Activated B cell treated with CpG ODN at 0.5 μM for 24 hours (primary cell): ENCODE measurements at regions of chr2 and their contacts with region 1.

Region 1: GRCh38 chr2:223923976-223924375 is 21.2 kb downstream of the WDFY1 start:
- DNase-seq: no peak
- ATAC-seq: no peak
- H3K4me3 Mint-ChIP-seq: no peak overlapping the region
- H3K27ac Mint-ChIP-seq: no peak overlapping the region
- H3K4me1 Mint-ChIP-seq: peaks cover 41% of the 10 kb centered on the region
- H3K27me3 Mint-ChIP-seq: no peaks in the 10 kb centered on the region
- CTCF ChIP-seq: no peak

Region 2: DNA sequence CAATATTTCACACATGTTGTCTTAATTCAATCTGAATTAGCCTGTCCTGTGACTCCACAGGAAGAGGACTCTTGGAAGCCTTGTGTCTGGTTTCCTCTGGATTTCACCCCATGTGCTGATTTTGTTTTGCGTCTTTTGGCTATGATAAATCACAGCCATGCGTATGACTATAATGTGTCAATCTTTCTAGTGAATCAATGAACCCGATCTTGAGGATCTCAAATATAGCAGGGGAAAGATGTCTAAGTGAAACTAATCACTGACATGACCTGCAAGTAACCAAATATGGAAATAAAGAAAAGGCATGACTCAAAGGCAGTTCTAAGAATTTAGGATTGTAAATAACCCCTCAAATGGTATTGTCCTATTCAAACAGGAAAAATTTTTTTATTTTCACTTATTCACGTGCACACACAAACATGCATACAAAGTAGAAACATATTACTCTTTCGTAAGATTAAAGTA is 12.9 kb after region 1 on chr2:
- CTCF ChIA-PET with region 1: no interaction called
- POLR2A ChIA-PET with region 1: no interaction called
- intact Hi-C with region 1: loop called (anchors 2 kb)
- DNase-seq: no peak
- ATAC-seq: no peak
- H3K4me3 Mint-ChIP-seq: peak overlapping the region; percentile 35
- H3K27ac Mint-ChIP-seq: peak overlapping the region; percentile 59
- H3K4me1 Mint-ChIP-seq: peaks cover 72% of the 10 kb centered on the region
- H3K27me3 Mint-ChIP-seq: no peaks in the 10 kb centered on the region
- CTCF ChIP-seq: no peak